ENCODE measurements at regions of chr6 and their contacts with region 1.

Region 1: GRCh38 chr6:135088818-135089809 is 34.5 kb upstream of the HBS1L start:
- DNase-seq: peak; percentile 44
- H3K4me3 Mint-ChIP-seq: peak overlapping the region; percentile 30
- H3K27ac Mint-ChIP-seq: peak overlapping the region; percentile 92
- H3K4me1 Mint-ChIP-seq: peaks cover 85% of the 10 kb centered on the region
- H3K27me3 Mint-ChIP-seq: no peaks in the 10 kb centered on the region

Region 2: DNA sequence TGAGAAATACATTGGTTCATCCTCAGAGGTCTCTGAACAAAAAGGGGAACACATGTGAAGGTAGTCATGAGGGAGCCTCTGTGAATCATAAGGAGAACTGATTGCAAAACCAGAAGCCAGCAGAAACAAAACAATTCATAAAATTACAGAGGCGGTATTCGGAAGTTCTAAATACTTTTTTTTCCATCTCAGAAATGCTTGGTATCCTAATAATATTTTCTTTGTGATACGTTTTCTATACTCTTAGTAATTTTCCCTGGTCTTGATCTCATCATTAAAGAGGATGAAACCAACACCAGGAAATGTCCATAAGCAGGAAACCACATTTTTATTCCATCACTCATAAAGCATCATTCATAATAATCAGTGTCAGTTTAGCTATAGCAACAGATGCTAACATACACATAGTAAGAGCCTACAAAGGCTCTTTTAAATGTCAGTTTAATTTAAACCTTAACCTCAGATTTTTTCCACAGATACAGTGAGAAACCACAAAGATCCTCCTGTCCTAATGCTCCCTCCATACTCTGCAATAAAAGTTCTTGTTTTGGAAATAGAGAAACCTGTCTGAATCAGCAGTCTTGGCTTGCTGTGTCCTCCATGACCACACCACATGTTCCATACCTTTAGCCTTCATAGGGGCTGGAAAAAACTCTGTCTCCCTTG is 800.4 kb before region 1 on chr6:
- intact Hi-C with region 1: loop called (anchors 5 kb)
- DNase-seq: peak; percentile 15
- H3K4me3 Mint-ChIP-seq: peak overlapping the region; percentile 28
- H3K27ac Mint-ChIP-seq: peak overlapping the region; percentile 96
- H3K4me1 Mint-ChIP-seq: peaks cover 32% of the 10 kb centered on the region
- H3K27me3 Mint-ChIP-seq: no peaks in the 10 kb centered on the region

Region 3: GRCh38 chr6:135014353-135014832 is 74.7 kb before region 1 on chr6:
- intact Hi-C with region 1: loop called (anchors 1 kb)
- DNase-seq: no peak
- H3K4me3 Mint-ChIP-seq: peak overlapping the region; percentile 30
- H3K27ac Mint-ChIP-seq: peak overlapping the region; percentile 91
- H3K4me1 Mint-ChIP-seq: peaks cover 57% of the 10 kb centered on the region
- H3K27me3 Mint-ChIP-seq: no peaks in the 10 kb centered on the region

Region 4: DNA sequence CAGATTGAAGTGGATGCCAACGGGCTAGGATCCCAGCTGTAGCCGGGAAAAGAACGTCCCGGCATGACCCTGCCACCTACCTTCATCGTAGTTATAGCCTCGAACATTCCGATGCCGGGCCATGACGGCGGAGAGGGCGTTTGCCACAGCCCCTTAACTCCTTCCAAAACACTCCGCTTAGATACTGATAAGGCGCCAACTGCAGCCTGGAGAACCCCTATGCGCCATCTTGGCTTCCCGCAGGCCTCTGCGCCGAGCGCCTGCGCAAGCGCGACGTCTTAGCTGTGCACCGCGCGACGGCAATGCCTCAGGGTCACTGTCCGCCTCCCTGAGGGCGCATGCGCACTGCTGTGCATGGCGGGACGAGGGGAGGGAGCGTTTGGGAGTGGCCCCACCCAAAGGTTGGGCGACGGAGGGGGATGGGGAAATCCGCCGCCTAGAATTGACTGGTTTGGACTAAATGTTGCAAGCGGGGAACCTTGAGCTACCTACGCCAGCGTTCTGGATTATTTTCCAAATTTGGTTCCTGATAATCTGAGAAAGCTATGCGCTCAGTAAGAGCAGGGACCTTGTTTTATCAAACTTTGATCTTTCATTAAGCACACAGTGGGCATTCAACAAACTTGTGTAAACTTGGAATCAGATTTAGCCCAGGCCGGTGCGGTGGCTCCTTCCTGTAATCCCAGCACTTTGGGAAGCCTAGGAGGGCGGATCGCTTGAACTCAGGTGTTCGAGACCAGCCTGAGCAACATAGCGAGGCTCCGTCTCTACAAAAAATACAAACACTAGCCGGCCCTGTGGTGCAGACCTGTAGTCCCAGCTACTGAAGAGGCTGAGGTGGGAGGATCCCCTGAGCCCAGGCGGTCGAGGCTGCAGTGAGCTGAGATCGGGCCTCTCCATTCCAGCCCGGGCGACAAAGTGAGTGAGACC is 34.3 kb before region 1 on chr6 and contains the start of gene HBS1L:
- intact Hi-C with region 1: loop called (anchors 1 kb)
- DNase-seq: peak; percentile 98
- H3K4me3 Mint-ChIP-seq: peak within 1 kb of the TSS; percentile 97
- H3K27ac Mint-ChIP-seq: peak within 1 kb of the TSS; percentile 97
- H3K4me1 Mint-ChIP-seq: peaks cover 36% of the 10 kb centered on the region
- H3K27me3 Mint-ChIP-seq: no peaks in the 10 kb centered on the region
- total RNA-seq, gene HBS1L: 99.2 and 102 TPM in 2 replicates

Region 5: DNA sequence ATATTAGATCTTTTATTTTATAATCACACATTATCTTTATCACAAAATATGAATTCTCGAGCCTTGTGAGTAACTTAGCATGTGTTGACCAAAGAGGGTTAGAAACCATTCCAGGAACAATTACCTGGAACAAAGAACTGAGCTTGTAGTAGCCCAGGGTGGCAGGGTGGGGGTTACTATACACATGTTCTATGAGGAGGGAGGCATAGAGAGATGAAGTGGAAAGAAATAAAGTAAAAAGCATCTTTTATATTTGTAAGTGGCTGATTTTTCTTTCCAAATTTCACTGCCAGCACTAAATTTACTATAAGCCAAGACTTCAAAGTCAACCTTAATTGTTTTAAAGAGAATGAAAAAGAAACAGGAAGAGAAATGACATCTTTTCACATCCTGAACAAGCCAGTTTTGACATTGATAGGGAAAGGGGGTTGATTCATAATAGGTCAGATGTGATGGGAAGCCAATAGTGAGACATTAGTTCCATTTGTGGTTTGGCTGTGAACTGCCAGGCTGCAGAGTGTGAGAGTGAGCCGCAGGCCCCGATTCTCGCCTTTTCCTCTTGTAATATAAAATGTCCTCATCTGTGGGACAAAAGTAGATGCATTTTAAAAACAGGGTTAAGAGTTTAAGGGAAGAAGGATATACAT is 39.3 kb after region 1 on chr6:
- intact Hi-C with region 1: loop called (anchors 1 kb)
- DNase-seq: peak; percentile 55
- H3K4me3 Mint-ChIP-seq: peak overlapping the region; percentile 57
- H3K27ac Mint-ChIP-seq: peak overlapping the region; percentile 95
- H3K4me1 Mint-ChIP-seq: peaks cover 47% of the 10 kb centered on the region
- H3K27me3 Mint-ChIP-seq: no peaks in the 10 kb centered on the region

Region 6: DNA sequence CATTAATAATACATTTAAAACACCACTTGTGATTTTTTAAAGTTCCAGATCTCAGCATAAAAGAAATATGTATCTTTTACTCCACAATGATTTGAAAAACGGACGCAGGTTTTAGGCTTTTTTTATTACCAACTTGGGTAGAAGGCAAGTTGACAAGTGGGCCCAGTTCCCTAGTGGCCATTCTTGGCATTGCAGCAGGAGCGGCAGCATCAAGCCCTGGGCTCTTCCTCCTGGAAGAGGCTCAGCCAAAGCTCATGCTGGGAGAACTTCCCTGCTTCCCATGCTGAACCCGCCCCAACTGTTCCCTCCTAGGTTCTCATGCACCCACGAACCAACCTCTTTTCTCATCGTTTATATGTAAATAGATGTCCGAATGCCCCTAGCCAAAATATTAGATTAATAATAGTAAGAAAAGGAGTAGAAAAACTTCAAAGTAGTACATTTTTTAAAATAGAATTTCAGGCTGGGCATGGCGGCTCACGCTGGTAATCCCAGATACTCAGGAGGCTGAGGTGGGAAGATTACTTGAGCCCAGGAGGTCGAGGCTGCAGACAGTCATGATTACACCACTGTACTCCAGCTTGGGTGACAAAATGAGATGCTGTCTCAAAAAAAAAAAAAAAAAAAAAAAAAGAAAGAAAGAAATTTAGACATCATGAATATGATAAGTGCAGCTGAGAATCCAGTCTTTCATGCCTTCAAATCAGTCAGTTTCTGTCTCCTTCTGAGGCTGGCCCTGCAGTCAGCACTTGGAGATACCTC is 73.7 kb after region 1 on chr6:
- intact Hi-C with region 1: loop called (anchors 1 kb)
- DNase-seq: no peak
- H3K4me3 Mint-ChIP-seq: peak overlapping the region; percentile 31
- H3K27ac Mint-ChIP-seq: peak overlapping the region; percentile 98
- H3K4me1 Mint-ChIP-seq: peaks cover 66% of the 10 kb centered on the region
- H3K27me3 Mint-ChIP-seq: no peaks in the 10 kb centered on the region

Region 7: DNA sequence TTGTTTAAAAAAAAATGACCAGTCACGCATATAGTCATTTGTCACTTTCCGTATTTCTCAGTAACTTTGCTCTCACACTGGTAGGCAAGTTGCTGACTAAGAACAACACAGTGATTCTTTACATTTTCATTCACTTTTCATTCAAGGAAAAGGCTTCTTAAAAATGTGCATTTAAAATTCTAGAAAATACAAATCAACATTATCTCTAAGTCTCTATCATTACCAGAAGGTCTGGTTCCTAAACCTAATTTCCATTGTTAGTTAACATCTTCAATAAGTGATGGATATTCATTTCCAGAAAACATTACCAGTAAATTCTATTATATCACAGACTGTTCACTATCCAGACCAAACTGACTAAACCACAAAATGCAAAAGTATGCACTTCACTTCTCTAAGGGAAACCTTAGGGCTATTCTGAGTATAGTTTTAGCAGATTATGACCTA is 293.1 kb after region 1 on chr6:
- intact Hi-C with region 1: loop called (anchors 2 kb)
- DNase-seq: no peak
- H3K4me3 Mint-ChIP-seq: no peak overlapping the region
- H3K27ac Mint-ChIP-seq: no peak overlapping the region
- H3K4me1 Mint-ChIP-seq: peaks cover 14% of the 10 kb centered on the region
- H3K27me3 Mint-ChIP-seq: no peaks in the 10 kb centered on the region